ENCODE measurements at regions of chr17 and their contacts with region 1.

Region 1: DNA sequence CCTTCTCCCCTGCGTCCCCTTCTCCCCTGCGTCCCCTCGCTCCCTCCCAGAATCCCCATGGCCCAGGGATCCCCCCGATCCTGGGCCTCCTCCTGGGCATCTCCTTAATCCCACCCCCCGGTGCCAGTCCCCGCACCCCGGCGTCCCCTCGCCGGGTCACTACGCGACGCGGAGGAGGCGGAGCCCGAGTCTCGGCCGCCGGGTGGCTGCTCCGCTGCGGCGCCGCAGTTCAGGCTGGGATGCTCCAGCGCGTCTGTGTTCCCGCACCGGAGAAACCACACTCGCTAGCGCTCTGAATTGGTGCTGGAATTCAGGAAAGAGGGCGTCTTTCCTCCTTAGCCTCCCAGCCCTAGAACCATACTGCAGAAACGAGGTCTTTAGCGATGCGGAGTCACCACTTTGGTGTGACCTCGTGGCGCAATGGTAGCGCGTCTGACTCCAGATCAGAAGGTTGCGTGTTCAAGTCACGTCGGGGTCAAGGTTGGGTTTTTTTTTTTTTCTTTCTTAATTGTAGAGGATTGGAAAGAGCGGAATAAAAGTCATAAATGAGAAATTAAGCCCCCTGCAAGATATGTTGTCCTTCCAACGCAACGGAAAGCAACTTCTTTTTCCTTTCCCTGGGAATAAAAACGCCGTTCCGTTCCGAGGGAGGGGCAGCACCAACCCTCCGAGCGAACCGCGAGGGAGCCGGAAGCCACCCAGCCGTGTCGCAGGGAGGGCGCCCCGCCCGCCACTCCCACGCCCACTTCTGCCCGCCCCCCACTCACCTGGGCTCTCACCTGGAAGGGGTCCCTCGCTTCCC is 25.7 kb upstream of the SLC47A1 start:
- DNase-seq: peak; percentile 69
- ATAC-seq: peak; percentile 87
- H3K4me3 ChIP-seq: peak overlapping the region; percentile 55 to 67
- H3K27ac ChIP-seq: peak overlapping the region; percentile 71
- H3K4me1 ChIP-seq: peaks cover 6 to 15% of the 10 kb centered on the region in 2 experiments; a peak in 3 of 4 replicates
- H3K27me3 ChIP-seq: no peaks in the 10 kb centered on the region
- CTCF ChIP-seq: no peak
- POLR2A ChIP-seq: no peak
- RAD21 ChIP-seq: no peak

Region 2: GRCh38 chr17:19278729-19279128 is 229.2 kb before region 1 on chr17:
- CTCF ChIA-PET with region 1: no interaction called
- POLR2A ChIA-PET with region 1: no interaction called
- RAD21 ChIA-PET with region 1: no interaction called
- intact Hi-C with region 1: no loop called
- DNase-seq: no peak
- ATAC-seq: no peak
- H3K4me3 ChIP-seq: no peak overlapping the region
- H3K27ac ChIP-seq: no peak overlapping the region
- H3K4me1 ChIP-seq: no peaks in the 10 kb centered on the region
- H3K27me3 ChIP-seq: no peaks in the 10 kb centered on the region
- CTCF ChIP-seq: no peak
- POLR2A ChIP-seq: no peak
- RAD21 ChIP-seq: no peak

Region 3: GRCh38 chr17:19290066-19290705 is 217.8 kb before region 1 on chr17:
- CTCF ChIA-PET with region 1: no interaction called
- POLR2A ChIA-PET with region 1: no interaction called
- RAD21 ChIA-PET with region 1: no interaction called
- intact Hi-C with region 1: no loop called
- DNase-seq: no peak
- ATAC-seq: no peak
- H3K4me3 ChIP-seq: no peak overlapping the region
- H3K27ac ChIP-seq: no peak overlapping the region
- H3K4me1 ChIP-seq: peaks cover 0 to 5% of the 10 kb centered on the region in 2 experiments; a peak in 2 of 4 replicates
- H3K27me3 ChIP-seq: no peaks in the 10 kb centered on the region
- CTCF ChIP-seq: no peak
- POLR2A ChIP-seq: no peak
- RAD21 ChIP-seq: no peak

Region 4: GRCh38 chr17:19398301-19399181 is 109.4 kb before region 1 on chr17:
- CTCF ChIA-PET with region 1: no interaction called
- POLR2A ChIA-PET with region 1: no interaction called
- RAD21 ChIA-PET with region 1: no interaction called
- intact Hi-C with region 1: no loop called
- DNase-seq: no peak
- ATAC-seq: no peak
- H3K4me3 ChIP-seq: no peak overlapping the region
- H3K27ac ChIP-seq: 0 out of 2 replicates have a peak overlapping the region, but pooled peaks have one; percentile 16
- H3K4me1 ChIP-seq: peaks cover 14 to 16% of the 10 kb centered on the region in 2 experiments
- H3K27me3 ChIP-seq: no peaks in the 10 kb centered on the region
- CTCF ChIP-seq: no peak
- POLR2A ChIP-seq: no peak
- RAD21 ChIP-seq: no peak

Region 5: GRCh38 chr17:19447085-19447583 is 60.8 kb before region 1 on chr17:
- CTCF ChIA-PET with region 1: no interaction called
- POLR2A ChIA-PET with region 1: no interaction called
- RAD21 ChIA-PET with region 1: no interaction called
- intact Hi-C with region 1: no loop called
- DNase-seq: peak; percentile 62
- ATAC-seq: peak; percentile 90
- H3K4me3 ChIP-seq: no peak overlapping the region
- H3K27ac ChIP-seq: no peak overlapping the region
- H3K4me1 ChIP-seq: peaks cover 3 to 8% of the 10 kb centered on the region in 2 experiments; a peak in 3 of 4 replicates
- H3K27me3 ChIP-seq: no peaks in the 10 kb centered on the region
- CTCF ChIP-seq: peak; percentile 86 to 92 (median 87)
- POLR2A ChIP-seq: no peak
- RAD21 ChIP-seq: peak; percentile 96

Region 6: DNA sequence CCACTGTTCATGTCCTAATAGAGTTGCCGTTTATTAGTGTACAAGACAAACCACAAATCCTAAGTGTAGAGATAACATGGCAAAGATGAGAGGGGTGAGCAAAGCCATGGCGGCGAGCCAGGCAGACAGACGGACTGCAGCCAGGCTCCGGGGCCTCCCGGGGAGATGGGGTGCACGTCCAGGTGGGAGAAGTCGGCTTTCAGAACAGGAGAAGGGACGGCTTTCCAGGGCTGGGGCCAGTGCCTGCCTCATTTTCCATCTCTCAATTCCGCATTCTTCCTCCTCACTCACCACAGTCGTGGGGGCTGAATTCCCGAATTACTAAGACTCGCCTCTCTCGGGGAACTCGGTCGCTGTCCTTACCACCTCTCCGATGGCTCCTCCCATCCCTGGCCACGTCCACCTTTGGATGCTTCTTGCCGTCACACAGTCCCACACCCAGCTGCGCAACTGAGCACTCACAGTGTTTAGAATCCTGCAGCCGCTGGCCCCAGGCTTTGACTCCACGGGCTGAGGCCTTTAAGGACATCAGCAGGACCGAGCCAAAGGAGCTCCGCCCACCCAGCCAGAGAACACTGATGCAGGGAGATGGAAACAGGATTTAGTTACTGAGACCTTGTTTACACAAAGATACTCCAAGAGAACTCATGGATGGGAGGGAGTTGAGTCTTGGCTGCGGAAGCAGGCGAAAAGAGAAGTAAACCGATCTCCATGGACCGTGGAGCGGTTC is 37.3 kb before region 1 on chr17:
- CTCF ChIA-PET with region 1: no interaction called
- POLR2A ChIA-PET with region 1: no interaction called
- RAD21 ChIA-PET with region 1: no interaction called
- intact Hi-C with region 1: loop called (anchors 2 kb)
- DNase-seq: no peak
- ATAC-seq: no peak
- H3K4me3 ChIP-seq: no peak overlapping the region
- H3K27ac ChIP-seq: no peak overlapping the region
- H3K4me1 ChIP-seq: no peaks in the 10 kb centered on the region
- H3K27me3 ChIP-seq: no peaks in the 10 kb centered on the region
- CTCF ChIP-seq: no peak
- POLR2A ChIP-seq: no peak
- RAD21 ChIP-seq: no peak

Region 7: GRCh38 chr17:19648475-19649406 is 140.8 kb after region 1 on chr17 and contains the start of gene ALDH3A2:
- CTCF ChIA-PET with region 1: interaction called, 3 read pairs
- POLR2A ChIA-PET with region 1: interaction called, 3 read pairs
- RAD21 ChIA-PET with region 1: interaction called in 1 of 2 experiments, 3 read pairs
- intact Hi-C with region 1: loop called (anchors 5 kb)
- DNase-seq: peak; percentile 85
- ATAC-seq: peak; percentile 85
- H3K4me3 ChIP-seq: peak within 1 kb of the TSS; percentile 52 to 69
- H3K27ac ChIP-seq: peak within 1 kb of the TSS; percentile 99
- H3K4me1 ChIP-seq: peaks cover 53 to 73% of the 10 kb centered on the region in 2 experiments
- H3K27me3 ChIP-seq: no peaks in the 10 kb centered on the region
- CTCF ChIP-seq: peak in 1 of 3 experiments; percentile 17; a peak in 1 of 6 replicates
- POLR2A ChIP-seq: peak; percentile 77
- RAD21 ChIP-seq: peak; percentile 39
- total RNA-seq, gene ALDH3A2: 86.8 TPM

Region 8: DNA sequence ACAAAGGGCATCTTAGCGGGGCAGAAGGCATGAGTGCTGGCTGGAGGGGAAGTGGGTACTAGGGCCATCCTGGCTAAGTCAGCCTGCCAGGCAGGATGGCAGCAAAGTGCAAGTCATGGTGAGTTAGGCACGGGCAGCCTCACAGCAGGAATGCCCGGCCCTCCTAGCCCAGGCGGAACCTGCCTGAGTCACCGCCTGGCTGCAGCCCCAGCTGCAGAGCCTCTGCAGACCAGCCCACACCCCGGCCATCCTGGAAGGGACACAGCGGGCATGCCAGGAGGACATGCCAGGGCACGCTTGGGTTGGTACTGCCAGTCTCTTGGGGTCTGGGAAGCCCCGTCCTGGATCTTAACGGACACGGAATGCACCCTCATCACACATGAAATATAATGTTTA is 245.1 kb after region 1 on chr17:
- CTCF ChIA-PET with region 1: interaction called, 6 read pairs
- POLR2A ChIA-PET with region 1: no interaction called
- RAD21 ChIA-PET with region 1: interaction called in 1 of 2 experiments, 5 read pairs
- intact Hi-C with region 1: loop called (anchors 5 kb)
- DNase-seq: peak; percentile 79
- ATAC-seq: peak; percentile 85
- H3K4me3 ChIP-seq: peak overlapping the region; percentile 15 to 34
- H3K27ac ChIP-seq: peak overlapping the region; percentile 90
- H3K4me1 ChIP-seq: peaks cover 38 to 47% of the 10 kb centered on the region in 2 experiments
- H3K27me3 ChIP-seq: no peaks in the 10 kb centered on the region
- CTCF ChIP-seq: no peak
- POLR2A ChIP-seq: no peak
- RAD21 ChIP-seq: no peak

Measured in HCT116 (cell line).